ENCODE measurements at regions of chr1 and their contacts with region 1.

Region 1: DNA sequence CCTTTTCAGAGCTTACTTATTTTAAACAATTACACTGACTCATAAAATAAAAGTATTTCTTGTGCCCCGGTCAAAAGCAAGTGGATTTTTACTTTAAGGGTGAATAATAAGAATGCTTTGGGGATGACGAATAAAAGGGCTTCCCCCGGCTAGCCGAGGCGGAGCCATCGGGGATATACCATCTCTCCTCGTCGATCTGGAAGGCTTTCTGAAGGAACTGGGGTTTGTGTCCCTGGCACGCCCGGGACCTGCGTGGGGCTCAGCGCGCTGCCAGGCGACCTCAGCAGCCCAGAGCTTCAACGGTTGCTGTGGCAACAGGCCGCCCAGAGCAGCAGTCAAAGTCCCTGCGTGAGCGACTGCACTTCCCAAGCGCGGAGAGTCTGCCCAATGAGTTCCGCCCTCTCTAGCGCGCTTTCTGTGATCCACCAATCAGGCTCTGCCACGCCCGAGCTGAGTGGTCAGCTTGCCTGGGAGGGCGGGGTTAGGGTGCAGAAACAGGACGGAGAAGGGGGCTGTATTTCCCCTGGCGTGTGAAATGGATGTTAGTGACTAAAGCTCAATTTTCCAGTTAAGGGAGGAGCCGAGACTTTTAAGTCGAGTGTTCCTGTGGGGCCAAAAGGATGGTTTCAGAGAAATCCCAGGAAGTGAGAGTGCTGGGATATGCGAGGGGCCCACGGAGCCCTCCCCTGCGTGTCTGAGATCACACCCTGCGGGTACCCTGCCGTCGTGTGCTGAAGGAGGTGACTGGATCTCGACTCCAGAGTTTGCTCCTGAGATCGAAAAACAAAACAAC is 33.0 kb upstream of the MGST3 start:
- DNase-seq: peak; percentile 99
- ATAC-seq: peak; percentile 98
- H3K4me3 Mint-ChIP-seq: peak overlapping the region; percentile 81
- H3K27ac Mint-ChIP-seq: peak overlapping the region; percentile 87
- H3K4me1 Mint-ChIP-seq: peaks cover 26% of the 10 kb centered on the region
- H3K27me3 Mint-ChIP-seq: peaks cover 29% of the 10 kb centered on the region
- CTCF ChIP-seq: no peak

Region 2: GRCh38 chr1:165392634-165393571 is 205.2 kb before region 1 on chr1:
- CTCF ChIA-PET with region 1: interaction called, 77 read pairs
- POLR2A ChIA-PET with region 1: interaction called, 3 read pairs
- intact Hi-C with region 1: loop called (anchors 1 kb)
- DNase-seq: peak; percentile 89
- ATAC-seq: peak; percentile 99
- H3K4me3 Mint-ChIP-seq: peak overlapping the region; percentile 60
- H3K27ac Mint-ChIP-seq: peak overlapping the region; percentile 77
- H3K4me1 Mint-ChIP-seq: peaks cover 9% of the 10 kb centered on the region
- H3K27me3 Mint-ChIP-seq: peaks cover 66% of the 10 kb centered on the region
- CTCF ChIP-seq: peak; percentile 87

Region 3: DNA sequence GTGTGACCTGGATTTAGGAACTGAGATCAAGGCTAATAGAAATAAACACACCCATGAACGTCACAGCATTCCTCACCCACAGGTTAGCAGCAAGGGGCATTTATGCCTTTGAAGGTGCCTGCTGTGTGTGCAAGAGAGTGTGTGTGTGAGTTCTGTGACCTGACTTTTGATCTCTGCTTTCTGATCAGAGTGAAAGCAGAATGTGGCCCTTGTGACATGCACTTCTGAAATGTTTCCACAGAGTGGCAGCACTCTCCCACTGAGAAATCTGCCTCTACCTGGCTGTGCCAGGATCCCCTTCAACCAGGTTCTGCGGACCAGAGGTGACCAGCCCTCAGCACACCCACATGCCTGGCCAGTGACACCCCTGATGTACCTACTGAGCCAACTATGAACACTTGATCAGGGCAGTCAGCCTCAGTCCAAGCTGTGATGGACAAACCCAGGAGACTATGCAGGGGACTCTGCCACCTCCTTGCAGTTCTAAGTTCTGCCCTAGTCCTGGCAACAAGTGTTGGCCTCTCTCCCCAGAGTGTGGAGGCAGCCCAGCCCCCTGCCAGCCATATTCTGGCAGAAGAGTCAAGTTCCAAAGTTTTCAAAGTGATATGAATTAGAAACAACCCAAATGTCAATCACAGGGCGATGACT is 194.1 kb before region 1 on chr1:
- CTCF ChIA-PET with region 1: interaction called, 39 read pairs
- POLR2A ChIA-PET with region 1: no interaction called
- intact Hi-C with region 1: no loop called
- DNase-seq: peak; percentile 50
- ATAC-seq: peak; percentile 75
- H3K4me3 Mint-ChIP-seq: no peak overlapping the region
- H3K27ac Mint-ChIP-seq: no peak overlapping the region
- H3K4me1 Mint-ChIP-seq: no peaks in the 10 kb centered on the region
- H3K27me3 Mint-ChIP-seq: peaks cover 33% of the 10 kb centered on the region
- CTCF ChIP-seq: peak; percentile 62

Region 4: DNA sequence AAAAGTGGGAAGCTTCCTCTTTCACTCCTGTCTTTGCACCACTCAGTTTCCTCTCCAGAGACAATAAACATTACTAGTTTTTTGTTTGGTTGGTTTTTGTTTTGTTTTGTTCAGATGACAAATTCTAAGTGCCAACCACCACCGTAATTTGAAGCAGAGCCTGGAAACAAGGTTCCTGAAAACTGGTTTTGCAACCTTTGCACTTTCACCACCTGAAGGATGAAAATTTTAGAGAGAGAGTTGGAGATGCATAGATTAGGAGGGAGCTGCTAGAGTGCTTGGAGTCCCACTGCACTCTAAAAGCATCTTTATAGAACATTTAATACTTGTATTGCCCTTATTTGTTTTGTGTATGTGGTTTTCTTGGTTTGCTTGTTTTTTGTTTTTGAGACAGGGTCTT is 12.8 kb after region 1 on chr1:
- CTCF ChIA-PET with region 1: interaction called, 10 read pairs
- POLR2A ChIA-PET with region 1: no interaction called
- intact Hi-C with region 1: no loop called
- DNase-seq: no peak
- ATAC-seq: no peak
- H3K4me3 Mint-ChIP-seq: no peak overlapping the region
- H3K27ac Mint-ChIP-seq: no peak overlapping the region
- H3K4me1 Mint-ChIP-seq: no peaks in the 10 kb centered on the region
- H3K27me3 Mint-ChIP-seq: peaks cover 12% of the 10 kb centered on the region
- CTCF ChIP-seq: no peak

Region 5: GRCh38 chr1:165697881-165698760 is 100.0 kb after region 1 on chr1 and contains the start of gene ALDH9A1:
- CTCF ChIA-PET with region 1: interaction called, 25 read pairs
- POLR2A ChIA-PET with region 1: interaction called, 5 read pairs
- intact Hi-C with region 1: no loop called
- DNase-seq: peak; percentile 91
- ATAC-seq: peak; percentile 91
- H3K4me3 Mint-ChIP-seq: peak within 1 kb of the TSS; percentile 83
- H3K27ac Mint-ChIP-seq: peak within 1 kb of the TSS; percentile 93
- H3K4me1 Mint-ChIP-seq: peaks cover 19% of the 10 kb centered on the region
- H3K27me3 Mint-ChIP-seq: peaks cover 2% of the 10 kb centered on the region
- CTCF ChIP-seq: no peak
- total RNA-seq, gene ALDH9A1: 25.6 to 28.2 TPM

Region 6: GRCh38 chr1:165914136-165914798 is 316.2 kb after region 1 on chr1:
- CTCF ChIA-PET with region 1: interaction called, 90 read pairs
- POLR2A ChIA-PET with region 1: no interaction called
- intact Hi-C with region 1: loop called (anchors 2 kb)
- DNase-seq: peak; percentile 79
- ATAC-seq: peak; percentile 91
- H3K4me3 Mint-ChIP-seq: no peak overlapping the region
- H3K27ac Mint-ChIP-seq: no peak overlapping the region
- H3K4me1 Mint-ChIP-seq: no peaks in the 10 kb centered on the region
- H3K27me3 Mint-ChIP-seq: no peaks in the 10 kb centered on the region
- CTCF ChIP-seq: peak; percentile 85